H1 (cell line): ENCODE measurements at regions of chr12 and their contacts with region 1.

Region 1: GRCh38 chr12:111434680-111435338 is 29.1 kb downstream of the SH2B3 start:
- DNase-seq: no peak
- H3K4me3 ChIP-seq: no peak overlapping the region
- H3K27ac ChIP-seq: peak overlapping the region; percentile 32; the same call in 1 of the 2 replicates
- H3K4me1 ChIP-seq: peaks cover 4 to 49% (median 35%) of the 10 kb centered on the region in 4 experiments
- H3K27me3 ChIP-seq: no peaks in the 10 kb centered on the region
- CTCF ChIP-seq: no peak
- EP300 ChIP-seq: no peak
- POLR2A ChIP-seq: no peak
- RAD21 ChIP-seq: no peak

Region 2: DNA sequence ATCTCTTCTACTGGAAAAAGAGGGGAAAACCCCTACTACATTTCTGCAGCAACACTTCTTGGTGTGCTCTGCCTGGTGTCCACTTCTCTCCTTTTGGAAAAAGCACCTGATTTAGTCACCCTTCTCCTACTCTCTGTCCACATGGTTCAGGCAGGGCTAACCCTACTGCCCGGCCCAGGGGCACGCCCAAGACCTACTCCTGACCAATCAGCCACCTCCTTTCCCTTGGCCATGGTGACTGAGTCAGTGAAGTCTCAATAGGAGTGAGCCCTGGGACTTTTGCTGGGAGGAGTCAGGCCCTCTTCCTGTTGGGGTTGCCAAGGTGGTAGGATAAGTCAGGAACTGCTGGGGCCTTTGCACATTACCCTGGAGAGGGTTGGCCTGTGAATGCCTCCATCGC is 461.9 kb before region 1 on chr12:
- CTCF ChIA-PET with region 1: no interaction called
- POLR2A ChIA-PET with region 1: no interaction called
- DNase-seq: no peak
- H3K4me3 ChIP-seq: no peak overlapping the region
- H3K27ac ChIP-seq: no peak overlapping the region
- H3K4me1 ChIP-seq: no peaks in the 10 kb centered on the region
- H3K27me3 ChIP-seq: no peaks in the 10 kb centered on the region; a peak in 1 of 7 replicates
- CTCF ChIP-seq: no peak
- EP300 ChIP-seq: no peak
- POLR2A ChIP-seq: no peak
- RAD21 ChIP-seq: no peak

Region 3: GRCh38 chr12:111174251-111174960 is 260.4 kb before region 1 on chr12:
- CTCF ChIA-PET with region 1: no interaction called
- POLR2A ChIA-PET with region 1: no interaction called
- DNase-seq: no peak
- H3K4me3 ChIP-seq: no peak overlapping the region
- H3K27ac ChIP-seq: no peak overlapping the region
- H3K4me1 ChIP-seq: no peaks in the 10 kb centered on the region
- H3K27me3 ChIP-seq: peaks cover 0 to 2% (median 0%) of the 10 kb centered on the region in 4 experiments; a peak in 1 of 7 replicates
- CTCF ChIP-seq: peak; percentile 57 to 63 (median 60)
- EP300 ChIP-seq: no peak
- POLR2A ChIP-seq: no peak
- RAD21 ChIP-seq: peak; percentile 71 to 79

Region 4: DNA sequence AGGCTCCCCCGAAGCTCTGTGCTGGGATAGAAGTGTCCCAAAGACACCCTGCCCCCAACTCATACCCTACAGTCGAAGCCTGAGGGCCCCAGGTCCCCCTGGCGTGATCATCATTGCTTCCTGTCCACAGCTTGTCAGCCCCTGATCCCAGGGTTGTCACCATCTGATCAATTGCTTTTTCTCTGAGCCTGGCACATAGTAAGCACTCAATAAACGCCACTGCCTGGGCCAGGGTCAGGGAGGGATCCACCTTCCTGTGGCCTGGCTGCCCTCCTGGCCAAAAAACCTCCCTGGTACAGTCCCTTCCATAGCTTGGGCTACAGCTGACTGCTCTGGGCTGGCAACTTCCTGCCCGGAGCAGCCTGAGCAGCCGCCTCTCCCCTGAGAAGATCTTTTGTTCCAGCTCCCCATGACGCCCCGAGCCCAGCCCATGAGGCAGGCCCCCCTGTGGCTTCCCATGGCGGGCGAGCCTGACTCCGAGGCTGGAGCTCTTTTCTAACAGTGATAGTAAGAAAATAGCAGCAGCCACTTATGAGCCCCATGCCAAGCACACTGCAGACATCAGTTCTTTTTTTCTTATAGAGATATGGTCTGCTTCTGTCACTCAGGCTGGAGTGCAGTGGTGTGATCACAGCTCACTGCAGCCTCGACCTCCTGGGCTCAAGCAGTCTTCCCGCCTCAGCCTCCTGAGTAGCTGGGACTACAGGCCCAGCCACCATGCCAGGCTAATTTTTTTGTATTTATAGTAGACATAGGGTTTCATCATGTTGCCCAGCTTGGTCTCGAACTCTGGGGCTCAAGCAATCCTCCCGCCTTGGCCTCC is 22.6 kb before region 1 on chr12:
- CTCF ChIA-PET with region 1: interaction called, 838 read pairs
- POLR2A ChIA-PET with region 1: interaction called, 13 read pairs
- DNase-seq: no peak
- H3K4me3 ChIP-seq: no peak overlapping the region
- H3K27ac ChIP-seq: peak overlapping the region; percentile 63; the same call in 1 of the 2 replicates
- H3K4me1 ChIP-seq: peaks cover 31 to 61% (median 45%) of the 10 kb centered on the region in 4 experiments
- H3K27me3 ChIP-seq: no peaks in the 10 kb centered on the region
- CTCF ChIP-seq: no peak
- EP300 ChIP-seq: 0 out of 3 replicates have a peak, but pooled peaks of 1 of the 2 experiments have one; percentile 31
- POLR2A ChIP-seq: no peak
- RAD21 ChIP-seq: no peak

Region 5: DNA sequence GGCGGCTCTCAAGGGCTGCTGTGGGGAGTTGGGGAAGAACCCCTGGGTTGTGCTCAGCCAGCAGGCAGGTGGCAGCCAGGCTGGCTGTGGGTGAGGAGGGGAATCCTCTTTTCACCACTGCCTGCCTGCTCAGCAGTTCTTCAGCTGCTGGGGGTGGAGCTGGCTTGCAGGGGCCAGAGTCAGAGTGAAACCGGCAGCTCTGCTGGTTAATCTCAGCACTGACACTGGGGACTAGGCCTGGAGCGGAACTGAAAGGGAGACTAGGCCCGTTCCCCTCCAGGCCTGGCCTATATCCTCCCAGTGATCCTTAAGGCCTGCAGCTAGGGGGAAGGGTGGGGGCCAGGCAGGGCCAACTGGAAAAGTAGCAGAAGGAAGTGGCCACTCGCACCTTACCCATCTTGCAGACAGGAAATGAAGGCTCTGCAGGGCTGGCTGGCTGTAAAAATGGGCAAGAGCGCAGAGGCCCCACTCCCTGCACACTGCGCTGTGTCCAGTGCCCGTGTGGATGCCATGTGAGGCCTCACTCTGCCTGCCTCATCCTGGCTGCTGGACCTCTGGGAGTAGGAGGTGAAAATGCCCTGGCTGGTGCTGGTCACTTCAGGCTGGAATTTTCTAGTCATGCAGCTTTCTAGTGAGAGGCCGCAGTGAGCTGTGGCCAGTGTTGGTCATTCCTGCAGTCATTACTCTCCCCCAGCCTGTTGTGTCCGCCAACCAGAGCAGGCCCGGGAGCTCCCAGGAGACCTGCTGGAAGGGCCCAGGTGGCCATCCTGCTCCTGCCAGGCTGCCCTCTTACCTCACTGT is 10.3 kb after region 1 on chr12:
- CTCF ChIA-PET with region 1: interaction called, 80 read pairs
- POLR2A ChIA-PET with region 1: interaction called, 26 read pairs
- DNase-seq: peak in 1 of 2 experiments; percentile 48
- H3K4me3 ChIP-seq: no peak overlapping the region
- H3K27ac ChIP-seq: peak overlapping the region; percentile 33; the same call in 1 of the 2 replicates
- H3K4me1 ChIP-seq: peaks cover 0 to 19% (median 10%) of the 10 kb centered on the region in 4 experiments; a peak in 6 of 7 replicates
- H3K27me3 ChIP-seq: no peaks in the 10 kb centered on the region
- CTCF ChIP-seq: no peak
- EP300 ChIP-seq: no peak
- POLR2A ChIP-seq: no peak
- RAD21 ChIP-seq: 0 out of 4 replicates have a peak, but pooled peaks of 1 of the 2 experiments have one; percentile 3

Region 6: GRCh38 chr12:111467092-111467856 is 32.5 kb after region 1 on chr12:
- CTCF ChIA-PET with region 1: no interaction called
- POLR2A ChIA-PET with region 1: no interaction called
- DNase-seq: peak in 1 of 2 experiments; percentile 30
- H3K4me3 ChIP-seq: no peak overlapping the region
- H3K27ac ChIP-seq: no peak overlapping the region
- H3K4me1 ChIP-seq: no peaks in the 10 kb centered on the region
- H3K27me3 ChIP-seq: no peaks in the 10 kb centered on the region
- CTCF ChIP-seq: no peak
- EP300 ChIP-seq: no peak
- POLR2A ChIP-seq: no peak
- RAD21 ChIP-seq: no peak

Region 7: GRCh38 chr12:111505601-111506036 is 70.8 kb after region 1 on chr12:
- CTCF ChIA-PET with region 1: no interaction called
- POLR2A ChIA-PET with region 1: no interaction called
- DNase-seq: no peak
- H3K4me3 ChIP-seq: no peak overlapping the region
- H3K27ac ChIP-seq: no peak overlapping the region
- H3K4me1 ChIP-seq: no peaks in the 10 kb centered on the region
- H3K27me3 ChIP-seq: no peaks in the 10 kb centered on the region
- CTCF ChIP-seq: no peak
- EP300 ChIP-seq: no peak
- POLR2A ChIP-seq: no peak
- RAD21 ChIP-seq: no peak